ENCODE measurements at regions of chr2 and their contacts with region 1.

Region 1: GRCh38 chr2:135004005-135004746 is 43.1 kb downstream of the MAP3K19 start:
- DNase-seq: peak; percentile 86
- H3K27ac ChIP-seq: no peak overlapping the region
- CTCF ChIP-seq: peak; percentile 94

Region 2: DNA sequence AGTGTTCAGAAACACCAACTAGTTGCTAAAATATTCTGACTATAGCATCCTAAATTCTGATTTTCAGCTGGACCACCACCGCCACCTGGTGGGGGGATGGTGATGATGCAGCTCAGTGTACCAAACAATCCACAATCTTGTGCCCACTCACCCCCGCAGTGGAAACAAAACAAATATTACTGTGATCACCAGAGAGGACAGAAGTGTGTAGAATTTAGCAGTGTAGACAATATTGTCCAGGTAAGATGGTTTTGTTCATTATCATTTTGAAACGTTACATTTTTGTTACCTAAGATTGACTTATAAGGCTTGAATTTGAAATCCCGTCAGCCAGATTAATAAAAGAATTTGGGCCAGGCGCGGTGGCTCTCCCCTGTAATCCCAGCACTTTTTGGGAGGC is 705.8 kb after region 1 on chr2:
- CTCF ChIA-PET with region 1: interaction called, 31 read pairs
- POLR2A ChIA-PET with region 1: no interaction called
- DNase-seq: peak; percentile 50
- H3K27ac ChIP-seq: no peak overlapping the region
- CTCF ChIP-seq: peak; percentile 94